GM12878 (cell line): ENCODE measurements at regions of chrX and their contacts with region 1.

Region 1: DNA sequence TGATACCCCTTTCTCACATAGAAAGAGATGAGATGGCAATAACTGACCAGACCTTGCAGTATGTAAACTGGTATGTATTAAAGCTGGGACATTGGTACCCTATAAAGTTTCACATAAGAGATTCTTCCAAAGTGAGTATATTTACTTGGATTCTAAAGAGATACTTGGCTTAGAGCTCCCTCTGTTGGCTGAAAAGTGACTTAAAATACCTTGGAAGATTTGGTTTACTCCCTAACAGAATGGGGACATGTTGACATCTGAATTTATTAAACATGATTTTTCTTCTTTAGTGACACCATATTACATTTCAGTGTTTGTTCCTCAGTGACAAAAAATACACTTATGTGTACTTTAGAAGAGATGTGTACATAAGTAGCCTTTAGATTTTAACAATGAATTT is 47.9 kb upstream of the RGN start:
- DNase-seq: peak; percentile 2
- ATAC-seq: peak; percentile 64
- H3K4me3 ChIP-seq: no peak overlapping the region
- H3K27ac ChIP-seq: no peak overlapping the region
- H3K4me1 ChIP-seq: no peaks in the 10 kb centered on the region
- H3K27me3 ChIP-seq: no peaks in the 10 kb centered on the region; a peak in 1 of 4 replicates
- CTCF ChIP-seq: peak; percentile 54 to 66 (median 54)
- EP300 ChIP-seq: no peak
- POLR2A ChIP-seq: no peak
- RAD21 ChIP-seq: peak; percentile 75

Region 2: DNA sequence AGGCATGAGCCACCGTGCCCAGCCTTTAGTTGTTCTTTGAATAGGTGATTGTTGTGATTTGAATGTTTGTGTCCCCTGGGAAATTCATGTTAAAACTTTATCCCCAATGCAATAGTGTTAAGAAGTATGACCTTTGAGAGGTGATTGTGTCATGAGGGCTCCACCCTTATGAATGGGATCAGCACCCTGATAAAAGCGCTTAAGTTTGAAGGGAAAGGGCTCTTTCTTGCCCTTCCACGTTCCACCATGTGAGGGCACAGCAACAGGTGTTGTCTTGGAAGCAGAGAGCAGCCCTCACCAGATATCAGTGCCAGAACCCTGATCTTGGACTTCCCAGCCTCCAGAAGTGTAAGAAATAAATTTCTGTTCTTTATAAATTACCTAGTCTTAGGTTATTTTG is 227.2 kb before region 1 on chrX:
- CTCF ChIA-PET with region 1: interaction called, 15 read pairs
- POLR2A ChIA-PET with region 1: no interaction called
- RAD21 ChIA-PET with region 1: interaction called, 3 read pairs
- SMC1A ChIA-PET with region 1: interaction called, 4 read pairs
- in situ Hi-C with region 1: no loop called
- intact Hi-C with region 1: loop called (anchors 1 kb)
- DNase-seq: no peak
- ATAC-seq: peak; percentile 53
- H3K4me3 ChIP-seq: no peak overlapping the region
- H3K27ac ChIP-seq: no peak overlapping the region
- H3K4me1 ChIP-seq: no peaks in the 10 kb centered on the region
- H3K27me3 ChIP-seq: no peaks in the 10 kb centered on the region; a peak in 1 of 4 replicates
- CTCF ChIP-seq: peak; percentile 27 to 37 (median 34); a peak in 4 of 6 replicates
- EP300 ChIP-seq: no peak
- POLR2A ChIP-seq: no peak
- RAD21 ChIP-seq: peak; percentile 38; the same call in 1 of the 2 replicates

Region 3: GRCh38 chrX:46903458-46904242 is 126.7 kb before region 1 on chrX:
- CTCF ChIA-PET with region 1: interaction called, 21 read pairs
- POLR2A ChIA-PET with region 1: no interaction called
- RAD21 ChIA-PET with region 1: interaction called, 8 read pairs
- SMC1A ChIA-PET with region 1: interaction called, 12 read pairs
- in situ Hi-C with region 1: no loop called
- intact Hi-C with region 1: loop called (anchors 5 kb)
- DNase-seq: peak; percentile 48
- ATAC-seq: peak; percentile 100
- H3K4me3 ChIP-seq: peak overlapping the region; percentile 33; the same call in 1 of the 2 replicates
- H3K27ac ChIP-seq: no peak overlapping the region
- H3K4me1 ChIP-seq: no peaks in the 10 kb centered on the region
- H3K27me3 ChIP-seq: no peaks in the 10 kb centered on the region
- CTCF ChIP-seq: peak; percentile 60 to 67 (median 66)
- EP300 ChIP-seq: no peak
- POLR2A ChIP-seq: no peak
- RAD21 ChIP-seq: peak; percentile 65

Region 4: GRCh38 chrX:47283015-47283771 is 252.9 kb after region 1 on chrX:
- CTCF ChIA-PET with region 1: no interaction called
- POLR2A ChIA-PET with region 1: no interaction called
- RAD21 ChIA-PET with region 1: no interaction called
- SMC1A ChIA-PET with region 1: no interaction called
- in situ Hi-C with region 1: no loop called
- intact Hi-C with region 1: no loop called
- DNase-seq: no peak
- ATAC-seq: no peak
- H3K4me3 ChIP-seq: no peak overlapping the region
- H3K27ac ChIP-seq: no peak overlapping the region
- H3K4me1 ChIP-seq: no peaks in the 10 kb centered on the region
- H3K27me3 ChIP-seq: no peaks in the 10 kb centered on the region
- CTCF ChIP-seq: no peak
- EP300 ChIP-seq: no peak
- POLR2A ChIP-seq: no peak
- RAD21 ChIP-seq: no peak